GM10248 (cell line): ENCODE measurements at regions of chr5 and their contacts with region 1.

Region 1: DNA sequence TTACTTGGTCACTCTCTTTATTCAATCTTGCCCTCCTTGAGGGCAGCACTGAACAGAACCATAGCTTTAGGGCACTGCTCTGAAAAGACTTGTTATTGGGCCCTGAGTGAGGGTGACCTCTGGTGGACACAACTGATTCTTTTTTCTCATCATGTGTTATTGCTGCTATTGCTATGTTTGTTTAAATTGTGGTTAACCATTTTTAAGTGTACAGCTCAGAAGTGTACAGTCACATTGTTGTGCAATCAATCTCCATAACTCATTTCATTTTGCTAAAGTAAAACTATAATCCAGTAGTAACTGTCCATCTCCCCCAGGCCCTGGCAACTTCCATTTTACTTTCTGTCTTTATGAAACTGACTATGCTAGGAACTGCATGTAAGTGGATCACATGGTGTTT is 351.1 kb upstream of the RIOK2 start:
- DNase-seq: peak; percentile 41
- CTCF ChIP-seq: peak; percentile 55

Region 2: GRCh38 chr5:97231025-97231636 is 303.0 kb before region 1 on chr5:
- CTCF ChIA-PET with region 1: interaction called, 35 read pairs
- POLR2A ChIA-PET with region 1: no interaction called
- DNase-seq: peak; percentile 31
- CTCF ChIP-seq: peak; percentile 74

Region 3: DNA sequence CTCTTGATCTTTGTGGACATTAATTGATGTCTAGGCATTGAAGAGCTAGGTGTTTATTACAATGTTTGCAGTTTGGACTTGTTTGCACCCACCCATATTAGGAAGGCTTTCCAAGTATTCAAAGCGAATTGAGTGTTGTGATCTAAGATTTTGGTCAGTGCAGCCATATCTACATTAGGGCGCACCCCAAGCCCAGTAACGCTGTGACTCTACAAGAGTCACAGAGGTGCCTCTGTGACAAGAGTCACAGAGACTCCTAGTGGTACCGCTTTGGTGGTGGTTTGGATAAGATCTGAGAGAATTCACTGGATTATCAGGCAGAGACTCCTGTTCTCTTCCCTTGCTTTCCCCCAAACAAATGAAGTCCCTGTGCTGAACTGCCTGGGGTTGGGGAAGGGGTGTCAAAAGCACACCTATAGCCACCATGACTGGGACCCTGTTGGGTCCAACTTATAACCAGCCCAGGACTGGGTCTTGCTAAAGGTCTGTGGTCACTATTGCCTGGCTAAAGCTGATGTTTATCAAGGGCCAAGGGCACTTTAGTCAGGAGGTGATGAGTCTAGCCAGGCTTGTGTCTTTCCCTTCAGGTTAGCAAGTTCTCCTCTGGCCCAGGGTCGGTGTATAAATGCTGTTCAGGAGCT is 237.0 kb before region 1 on chr5:
- CTCF ChIA-PET with region 1: interaction called, 36 read pairs
- POLR2A ChIA-PET with region 1: no interaction called
- DNase-seq: peak; percentile 39
- CTCF ChIP-seq: peak; percentile 31

Region 4: DNA sequence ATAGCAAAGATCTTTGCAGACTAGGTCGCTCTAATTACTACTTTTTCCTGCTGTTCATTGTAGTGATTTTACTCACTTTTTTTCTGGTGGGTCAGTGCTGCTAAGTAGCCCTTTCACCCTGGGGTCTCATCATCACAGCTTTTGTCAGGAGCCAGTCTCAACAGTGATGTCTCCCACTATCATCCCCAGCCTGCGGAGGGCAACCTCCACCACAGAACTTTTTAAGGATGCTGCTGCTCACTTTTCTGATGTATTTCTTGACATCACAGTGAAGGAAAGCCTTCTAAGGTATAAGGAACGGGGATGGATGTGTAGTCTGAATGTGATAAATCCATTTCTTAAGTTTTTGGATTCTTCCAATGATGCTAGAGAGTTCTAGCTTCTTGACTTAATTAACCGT is 108.7 kb before region 1 on chr5:
- CTCF ChIA-PET with region 1: interaction called, 21 read pairs
- POLR2A ChIA-PET with region 1: no interaction called
- DNase-seq: no peak
- CTCF ChIP-seq: peak; percentile 35

Region 5: GRCh38 chr5:97501965-97502305 is 32.2 kb before region 1 on chr5:
- CTCF ChIA-PET with region 1: interaction called, 17 read pairs
- POLR2A ChIA-PET with region 1: no interaction called
- DNase-seq: no peak
- CTCF ChIP-seq: no peak